SK-N-SH (cell line): ENCODE measurements at regions of chr2 and their contacts with region 1.

Region 1: DNA sequence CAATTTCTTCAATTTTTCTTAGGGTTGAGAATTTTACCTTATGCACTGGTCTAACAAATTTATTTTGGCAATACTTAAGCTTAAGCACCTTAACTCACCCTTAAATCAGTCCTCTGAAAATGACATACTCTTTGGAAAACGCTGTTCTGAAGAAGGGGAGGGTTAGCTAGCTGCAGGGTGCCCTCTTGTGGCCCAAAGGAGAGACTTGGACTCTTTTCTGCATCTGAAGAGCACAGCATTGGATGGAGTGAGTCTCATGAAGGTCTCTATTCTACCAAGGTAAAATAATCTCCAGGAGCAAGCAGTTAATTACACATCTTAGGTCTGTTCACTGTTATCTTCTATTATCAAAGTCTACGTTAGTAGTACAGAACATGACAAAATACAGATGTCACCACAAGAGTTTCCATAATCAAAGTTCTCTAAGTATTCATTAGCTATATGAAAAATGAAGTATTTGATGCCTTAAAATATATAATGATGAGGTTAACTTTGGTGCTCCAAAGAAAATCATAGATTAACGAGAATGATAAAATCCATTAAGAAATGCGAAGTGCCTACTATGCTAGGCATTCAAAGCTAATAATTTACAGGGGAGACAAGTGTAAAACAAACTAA is 24.4 kb downstream of the PUM2 start:
- DNase-seq: peak; percentile 74
- H3K4me3 ChIP-seq: no peak overlapping the region
- H3K27ac ChIP-seq: peak overlapping the region; percentile 18 to 33; a peak in 2 of 4 replicates
- H3K4me1 ChIP-seq: peaks cover 0 to 7% of the 10 kb centered on the region in 2 experiments; a peak in 2 of 4 replicates
- H3K27me3 ChIP-seq: no peaks in the 10 kb centered on the region
- CTCF ChIP-seq: peak; percentile 99
- EP300 ChIP-seq: no peak
- RAD21 ChIP-seq: peak; percentile 81

Region 2: DNA sequence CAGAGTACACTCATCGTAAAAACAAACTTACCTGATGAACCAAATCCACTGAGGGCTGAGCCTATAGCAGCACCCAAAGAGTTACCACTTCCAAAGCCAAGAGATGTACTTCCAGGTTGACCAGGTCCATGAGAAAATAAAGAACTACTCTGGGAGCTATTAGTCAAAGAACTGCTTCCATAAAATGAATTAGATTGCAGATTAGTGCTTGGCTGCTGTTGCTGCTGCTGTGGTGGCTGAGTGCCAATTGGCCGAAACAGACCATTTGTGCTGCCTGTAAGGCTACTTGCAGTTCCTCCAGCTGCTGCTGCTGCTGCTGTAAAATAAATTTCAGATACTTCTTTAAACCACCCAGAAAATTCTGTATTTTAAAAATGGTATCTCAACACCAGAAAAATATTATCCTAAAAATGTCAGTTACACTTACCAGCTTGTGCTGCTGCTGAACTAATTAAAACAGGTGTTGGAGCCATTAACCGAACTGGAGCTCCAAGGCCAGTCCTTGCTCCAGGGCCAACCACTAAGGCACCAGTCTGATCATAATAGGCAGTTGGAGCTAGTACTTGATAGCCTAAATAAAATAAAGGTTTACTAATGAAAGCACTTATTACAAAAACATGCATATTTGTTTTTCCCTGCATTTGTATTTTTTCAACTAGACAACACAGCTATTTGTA is 43.2 kb before region 1 on chr2:
- CTCF ChIA-PET with region 1: interaction called, 23 read pairs
- POLR2A ChIA-PET with region 1: interaction called, 3 read pairs
- DNase-seq: peak; percentile 69
- H3K4me3 ChIP-seq: no peak overlapping the region
- H3K27ac ChIP-seq: peak overlapping the region; percentile 1 to 98; a peak in 2 of 4 replicates
- H3K4me1 ChIP-seq: peaks cover 0 to 50% of the 10 kb centered on the region in 2 experiments; a peak in 2 of 4 replicates
- H3K27me3 ChIP-seq: no peaks in the 10 kb centered on the region
- CTCF ChIP-seq: no peak
- EP300 ChIP-seq: peak in 1 of 2 experiments; percentile 79; a peak in 2 of 4 replicates
- RAD21 ChIP-seq: peak; percentile 34

Region 3: DNA sequence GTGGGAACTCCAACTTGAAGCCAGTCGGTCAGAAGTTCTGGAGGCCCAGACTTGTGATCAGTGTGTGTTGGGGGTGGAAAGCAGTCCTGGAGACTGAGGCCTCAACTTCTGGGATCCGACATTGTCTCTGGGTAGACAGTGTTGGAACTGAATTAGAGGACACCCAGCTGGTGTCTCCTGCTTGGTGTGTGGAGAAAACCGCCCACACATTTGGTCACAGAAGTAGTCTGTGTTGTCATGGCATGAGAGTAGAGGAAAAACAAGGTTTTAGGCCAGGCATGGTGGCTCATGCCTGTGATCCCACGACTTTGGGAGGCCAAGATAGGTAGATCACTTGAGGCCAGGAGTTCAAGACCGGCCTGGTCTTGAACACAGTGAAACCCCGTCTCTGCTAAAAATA is 27.2 kb before region 1 on chr2:
- CTCF ChIA-PET with region 1: interaction called, 69 read pairs
- POLR2A ChIA-PET with region 1: no interaction called
- DNase-seq: no peak
- H3K4me3 ChIP-seq: no peak overlapping the region
- H3K27ac ChIP-seq: no peak overlapping the region
- H3K4me1 ChIP-seq: peaks cover 6 to 19% of the 10 kb centered on the region in 2 experiments; a peak in 3 of 4 replicates
- H3K27me3 ChIP-seq: no peaks in the 10 kb centered on the region
- CTCF ChIP-seq: no peak
- EP300 ChIP-seq: no peak
- RAD21 ChIP-seq: no peak

Region 4: DNA sequence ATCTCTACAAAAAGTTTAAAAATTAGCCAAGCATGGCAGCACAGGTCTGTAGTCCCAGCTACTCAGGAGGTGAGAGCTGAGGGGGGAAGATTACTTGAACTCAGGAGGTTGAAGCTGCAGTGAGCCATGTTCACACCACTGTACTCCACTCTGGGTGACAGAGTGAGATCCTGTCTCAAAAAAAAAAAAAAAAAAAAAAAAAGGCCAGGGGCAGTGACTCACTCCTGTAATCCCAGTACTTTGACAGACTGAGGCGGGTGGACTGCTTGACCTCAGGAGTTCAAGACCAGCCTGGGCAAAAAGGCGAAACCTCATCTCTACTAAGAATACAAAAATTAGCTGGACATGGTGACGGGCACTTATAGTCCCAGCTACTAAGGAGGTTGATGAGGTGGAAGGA is 12.6 kb before region 1 on chr2:
- CTCF ChIA-PET with region 1: interaction called, 124 read pairs
- POLR2A ChIA-PET with region 1: no interaction called
- DNase-seq: no peak
- H3K4me3 ChIP-seq: no peak overlapping the region
- H3K27ac ChIP-seq: peak overlapping the region in 1 of 2 experiments; percentile 30; a peak in 1 of 4 replicates
- H3K4me1 ChIP-seq: peaks cover 0 to 6% of the 10 kb centered on the region in 2 experiments; a peak in 2 of 4 replicates
- H3K27me3 ChIP-seq: no peaks in the 10 kb centered on the region
- CTCF ChIP-seq: no peak
- EP300 ChIP-seq: no peak
- RAD21 ChIP-seq: no peak

Region 5: GRCh38 chr2:20350753-20351554 is 24.7 kb after region 1 on chr2 and contains the start of gene PUM2:
- CTCF ChIA-PET with region 1: interaction called, 60 read pairs
- POLR2A ChIA-PET with region 1: no interaction called
- DNase-seq: peak; percentile 99
- H3K4me3 ChIP-seq: peak within 1 kb of the TSS; percentile 71 to 86
- H3K27ac ChIP-seq: peak within 1 kb of the TSS; percentile 82 to 99
- H3K4me1 ChIP-seq: peaks cover 11 to 48% of the 10 kb centered on the region in 2 experiments; a peak in 3 of 4 replicates
- H3K27me3 ChIP-seq: no peaks in the 10 kb centered on the region
- CTCF ChIP-seq: no peak
- EP300 ChIP-seq: no peak
- RAD21 ChIP-seq: no peak
- polyA plus RNA-seq, gene PUM2: 19.7 and 29.7 TPM in 2 replicates